ENCODE measurements at regions of chr19 and their contacts with region 1.

Region 1: DNA sequence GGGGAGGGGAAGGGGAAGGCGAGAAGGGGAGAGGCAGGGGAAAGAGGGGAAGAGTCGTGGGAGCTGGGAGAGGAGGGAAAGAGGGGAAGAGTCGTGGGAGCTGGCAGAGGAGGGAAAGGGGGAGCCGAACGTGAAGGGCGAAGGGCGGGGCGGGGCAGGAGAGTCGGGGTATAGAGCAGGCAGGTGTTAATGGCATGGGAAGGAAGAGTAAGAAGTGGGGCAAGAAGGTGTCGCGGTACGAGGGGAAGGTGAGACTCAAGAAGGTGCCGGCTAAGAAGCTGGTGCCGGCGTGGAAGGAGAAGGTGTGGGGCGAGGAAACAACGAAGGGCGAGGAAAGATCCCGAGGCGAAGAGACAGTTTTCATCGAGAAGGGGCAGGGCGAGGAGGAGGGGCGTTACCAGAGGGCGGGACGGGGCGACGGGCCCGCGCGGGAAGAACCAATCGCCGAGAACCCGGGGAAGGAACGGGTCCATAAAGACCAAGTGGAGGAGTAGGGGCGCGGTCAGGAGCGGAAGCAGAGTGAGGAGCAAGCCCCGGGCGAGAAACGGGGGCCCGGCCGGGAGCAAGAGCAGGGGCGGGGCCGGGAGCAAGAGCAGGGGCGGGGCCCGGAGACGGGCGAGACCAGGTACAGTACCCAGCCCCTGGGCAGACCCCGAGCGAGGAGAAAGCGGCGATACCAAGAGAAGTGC is 463 bp downstream of the CATSPERG start:
- DNase-seq: peak; percentile 96
- H3K4me3 ChIP-seq: peak overlapping the region; percentile 52 to 83 (median 75)
- H3K27ac ChIP-seq: peak overlapping the region; percentile 22
- H3K4me1 ChIP-seq: peaks cover 3% of the 10 kb centered on the region
- H3K27me3 ChIP-seq: no peaks in the 10 kb centered on the region
- CTCF ChIP-seq: no peak
- POLR2A ChIP-seq: no peak

Region 2: GRCh38 chr19:37896180-37896579 is 439.9 kb before region 1 on chr19:
- CTCF ChIA-PET with region 1: interaction called, 11 read pairs
- POLR2A ChIA-PET with region 1: no interaction called
- dilution Hi-C with region 1: no loop called
- intact Hi-C with region 1: loop called (anchors 1 kb)
- DNase-seq: no peak
- H3K4me3 ChIP-seq: no peak overlapping the region
- H3K27ac ChIP-seq: no peak overlapping the region
- H3K4me1 ChIP-seq: no peaks in the 10 kb centered on the region
- H3K27me3 ChIP-seq: peaks cover 0 to 2% of the 10 kb centered on the region in 2 experiments
- CTCF ChIP-seq: no peak
- POLR2A ChIP-seq: no peak

Region 3: DNA sequence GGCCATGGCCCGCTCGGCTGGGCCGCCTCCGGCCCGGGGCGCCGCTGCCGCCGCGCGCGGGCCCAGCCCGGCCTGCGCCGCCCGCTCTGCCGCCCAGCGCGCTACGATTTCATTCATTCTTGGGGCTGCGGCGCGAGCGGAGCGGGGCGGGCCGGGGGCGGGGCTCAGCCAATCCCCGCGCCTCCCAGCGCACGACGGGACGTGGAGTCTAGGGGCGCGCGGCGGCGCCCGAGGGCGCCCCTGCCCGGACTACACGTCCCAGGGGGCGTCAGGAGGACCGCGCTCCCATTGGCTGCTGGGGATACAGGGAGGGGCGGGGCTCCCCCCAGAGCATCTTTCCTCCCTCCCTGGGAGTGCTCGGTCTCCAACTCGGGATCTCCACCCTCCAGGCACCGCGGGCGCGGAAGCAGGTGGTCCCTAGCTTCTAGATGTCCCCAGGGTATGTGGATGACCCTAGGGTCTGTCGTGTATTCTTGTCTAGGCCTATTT is 106.5 kb before region 1 on chr19:
- CTCF ChIA-PET with region 1: interaction called, 53 read pairs
- POLR2A ChIA-PET with region 1: no interaction called
- dilution Hi-C with region 1: no loop called
- intact Hi-C with region 1: loop called (anchors 1 kb)
- DNase-seq: peak; percentile 77
- H3K4me3 ChIP-seq: peak overlapping the region in 1 of 3 experiments; percentile 14
- H3K27ac ChIP-seq: no peak overlapping the region
- H3K4me1 ChIP-seq: peaks cover 8% of the 10 kb centered on the region
- H3K27me3 ChIP-seq: peaks cover 9 to 14% of the 10 kb centered on the region in 2 experiments
- CTCF ChIP-seq: peak in 1 of 2 donors; percentile 13
- POLR2A ChIP-seq: no peak

Region 4: GRCh38 chr19:38277969-38278680 is 58.0 kb before region 1 on chr19:
- CTCF ChIA-PET with region 1: no interaction called
- POLR2A ChIA-PET with region 1: no interaction called
- dilution Hi-C with region 1: no loop called
- intact Hi-C with region 1: loop called (anchors 1 kb)
- DNase-seq: peak; percentile 78
- H3K4me3 ChIP-seq: no peak overlapping the region
- H3K27ac ChIP-seq: peak overlapping the region; percentile 73
- H3K4me1 ChIP-seq: peaks cover 30% of the 10 kb centered on the region
- H3K27me3 ChIP-seq: no peaks in the 10 kb centered on the region
- CTCF ChIP-seq: no peak
- POLR2A ChIP-seq: no peak

Region 5: GRCh38 chr19:38361633-38362075 is 25.6 kb after region 1 on chr19:
- CTCF ChIA-PET with region 1: no interaction called
- POLR2A ChIA-PET with region 1: no interaction called
- dilution Hi-C with region 1: no loop called
- intact Hi-C with region 1: loop called (anchors 1 kb)
- DNase-seq: peak; percentile 65
- H3K4me3 ChIP-seq: peak overlapping the region; percentile 42 to 49 (median 45)
- H3K27ac ChIP-seq: no peak overlapping the region
- H3K4me1 ChIP-seq: peaks cover 3% of the 10 kb centered on the region
- H3K27me3 ChIP-seq: peaks cover 13 to 14% of the 10 kb centered on the region in 2 experiments
- CTCF ChIP-seq: peak in 1 of 2 donors; percentile 10
- POLR2A ChIP-seq: no peak

Region 6: GRCh38 chr19:38387550-38388348 is 51.7 kb after region 1 on chr19 and contains the start of gene GGN:
- CTCF ChIA-PET with region 1: interaction called, 4 read pairs
- POLR2A ChIA-PET with region 1: no interaction called
- dilution Hi-C with region 1: no loop called
- intact Hi-C with region 1: loop called (anchors 1 kb)
- DNase-seq: peak; percentile 98
- H3K4me3 ChIP-seq: peak within 1 kb of the TSS; percentile 78 to 96 (median 91)
- H3K27ac ChIP-seq: peak within 1 kb of the TSS; percentile 84
- H3K4me1 ChIP-seq: peaks cover 15% of the 10 kb centered on the region
- H3K27me3 ChIP-seq: no peaks in the 10 kb centered on the region
- CTCF ChIP-seq: no peak
- POLR2A ChIP-seq: peak; percentile 18
- total RNA-seq, gene GGN: 0.88 and 1.5 TPM in 2 replicates